ENCODE measurements at regions of chr6 and their contacts with region 1.

Region 1: GRCh38 chr6:83067448-83068413 is at the start of gene DOP1A:
- DNase-seq: peak; percentile 95
- H3K4me3 ChIP-seq: peak within 1 kb of the TSS; percentile 76 to 95
- H3K27ac ChIP-seq: peak within 1 kb of the TSS; percentile 45 to 64; a peak in 3 of 4 replicates
- H3K4me1 ChIP-seq: peaks cover 3 to 21% of the 10 kb centered on the region in 2 experiments
- H3K27me3 ChIP-seq: no peaks in the 10 kb centered on the region
- CTCF ChIP-seq: peak; percentile 98
- EP300 ChIP-seq: no peak; a peak in 1 of 4 replicates
- RAD21 ChIP-seq: peak; percentile 96
- polyA plus RNA-seq, gene DOP1A: 3.4 and 4.0 TPM in 2 replicates

Region 2: DNA sequence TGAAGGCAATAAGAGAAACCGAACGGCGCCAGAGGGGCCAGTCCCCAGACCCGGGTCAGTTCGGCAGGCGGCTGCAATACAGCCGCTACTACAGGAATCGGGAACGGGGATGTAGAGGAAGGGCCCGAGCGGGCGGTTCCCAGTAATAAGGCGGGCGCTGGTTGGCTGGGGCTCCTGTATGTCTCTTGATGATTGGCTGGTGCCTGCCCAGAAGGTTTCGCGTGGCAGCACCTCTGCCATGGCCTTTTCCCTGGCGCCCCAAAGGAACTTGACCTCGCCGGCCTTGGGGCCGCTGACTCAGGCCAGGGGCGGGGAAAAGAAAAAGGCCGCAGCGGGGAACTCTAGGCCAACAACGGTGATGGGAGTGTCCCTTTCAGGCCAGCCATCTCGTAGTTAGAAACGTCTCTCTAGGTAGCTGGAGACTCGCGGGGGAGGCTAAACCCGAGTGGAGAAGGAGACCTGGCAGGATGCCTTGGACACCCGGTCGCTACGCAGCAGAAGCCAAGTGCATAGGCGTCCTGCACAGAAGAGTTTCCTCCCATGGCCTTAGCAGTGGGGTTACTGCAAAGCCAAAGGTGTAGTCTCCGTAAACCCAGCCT is 820.0 kb before region 1 on chr6 and contains the start of gene IBTK:
- CTCF ChIA-PET with region 1: interaction called, 16 read pairs
- POLR2A ChIA-PET with region 1: interaction called, 3 read pairs
- DNase-seq: peak; percentile 97
- H3K4me3 ChIP-seq: peak within 1 kb of the TSS; percentile 88
- H3K27ac ChIP-seq: peak within 1 kb of the TSS; percentile 93 to 96
- H3K4me1 ChIP-seq: peaks cover 12 to 21% of the 10 kb centered on the region in 2 experiments
- H3K27me3 ChIP-seq: no peaks in the 10 kb centered on the region
- CTCF ChIP-seq: no peak
- EP300 ChIP-seq: no peak
- RAD21 ChIP-seq: no peak
- polyA plus RNA-seq, gene IBTK: 9.5 and 14.5 TPM in 2 replicates

Region 3: DNA sequence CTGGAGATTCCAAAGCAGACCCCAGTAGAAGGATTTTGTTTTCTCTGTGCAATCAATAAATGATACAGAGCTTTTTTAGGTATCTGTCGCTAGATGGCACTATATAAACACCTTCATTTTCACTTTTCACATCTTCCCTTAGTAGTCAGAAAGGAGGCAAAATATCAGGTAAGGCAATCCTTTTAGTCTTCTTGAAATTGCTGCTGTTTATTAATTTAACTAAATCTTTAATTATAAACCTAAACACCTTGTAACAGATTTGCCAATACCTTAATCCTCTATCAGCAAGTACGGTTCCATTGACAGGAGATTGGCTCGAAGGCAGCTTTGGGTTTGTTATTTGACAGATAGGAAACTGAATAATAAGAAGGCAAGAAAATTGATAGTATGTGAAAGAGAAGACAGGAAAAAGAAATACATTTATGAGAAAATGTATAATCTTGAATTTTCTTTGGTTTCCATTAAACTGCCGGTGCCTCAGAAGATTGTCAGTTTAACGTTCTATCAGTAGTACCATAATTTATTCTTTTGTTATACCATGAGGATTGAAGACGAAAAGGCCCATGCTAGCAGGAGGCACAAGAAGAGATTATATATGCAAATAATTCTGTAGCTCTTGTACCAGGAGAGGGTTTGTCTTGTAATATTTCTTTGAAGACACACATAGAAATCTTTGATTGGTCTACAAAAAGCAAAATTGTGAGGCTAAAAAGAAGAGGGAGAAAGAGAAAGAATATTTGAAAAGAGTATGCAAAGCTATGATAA is 796.7 kb before region 1 on chr6:
- CTCF ChIA-PET with region 1: interaction called, 30 read pairs
- POLR2A ChIA-PET with region 1: no interaction called
- DNase-seq: peak; percentile 39
- H3K4me3 ChIP-seq: no peak overlapping the region
- H3K27ac ChIP-seq: no peak overlapping the region
- H3K4me1 ChIP-seq: peaks cover 9 to 32% of the 10 kb centered on the region in 2 experiments; a peak in 3 of 4 replicates
- H3K27me3 ChIP-seq: no peaks in the 10 kb centered on the region
- CTCF ChIP-seq: peak; percentile 84
- EP300 ChIP-seq: no peak
- RAD21 ChIP-seq: peak; percentile 84

Region 4: DNA sequence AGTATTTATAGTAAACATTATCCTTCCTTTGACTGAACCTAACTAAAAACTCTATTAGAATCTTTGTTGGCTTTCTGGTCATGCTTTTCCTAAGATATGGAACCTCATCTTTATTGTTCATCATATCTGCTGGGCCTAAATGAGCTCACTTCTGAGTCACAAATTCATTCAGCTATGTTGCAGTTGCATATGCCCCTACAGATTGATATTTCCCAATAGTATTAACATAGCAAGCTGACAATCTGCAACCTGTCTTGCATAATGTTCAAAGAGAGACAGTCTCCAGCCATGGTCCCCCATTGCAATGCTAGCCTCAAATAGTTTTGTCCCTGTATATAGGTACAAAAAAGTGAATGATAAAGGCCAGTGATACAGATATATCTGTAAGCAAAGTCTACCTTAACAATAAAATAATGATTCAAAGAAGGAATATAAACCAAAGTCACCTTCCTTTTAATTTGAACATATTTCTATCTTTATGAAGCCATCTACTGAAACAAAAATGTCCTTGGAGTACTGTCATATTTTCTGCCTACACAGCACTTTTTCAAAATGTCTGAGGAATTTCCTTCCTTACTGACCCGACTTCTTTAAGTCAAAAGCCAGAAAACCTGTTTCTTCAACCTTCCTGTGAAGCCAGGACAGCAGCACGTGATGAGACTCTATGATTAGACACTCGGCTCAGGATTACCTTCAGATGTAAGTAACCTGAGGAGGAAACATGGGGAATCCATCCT is 142.8 kb before region 1 on chr6:
- CTCF ChIA-PET with region 1: no interaction called
- POLR2A ChIA-PET with region 1: no interaction called
- DNase-seq: no peak
- H3K4me3 ChIP-seq: no peak overlapping the region
- H3K27ac ChIP-seq: no peak overlapping the region
- H3K4me1 ChIP-seq: no peaks in the 10 kb centered on the region
- H3K27me3 ChIP-seq: no peaks in the 10 kb centered on the region
- CTCF ChIP-seq: no peak
- EP300 ChIP-seq: no peak
- RAD21 ChIP-seq: no peak

Region 5: DNA sequence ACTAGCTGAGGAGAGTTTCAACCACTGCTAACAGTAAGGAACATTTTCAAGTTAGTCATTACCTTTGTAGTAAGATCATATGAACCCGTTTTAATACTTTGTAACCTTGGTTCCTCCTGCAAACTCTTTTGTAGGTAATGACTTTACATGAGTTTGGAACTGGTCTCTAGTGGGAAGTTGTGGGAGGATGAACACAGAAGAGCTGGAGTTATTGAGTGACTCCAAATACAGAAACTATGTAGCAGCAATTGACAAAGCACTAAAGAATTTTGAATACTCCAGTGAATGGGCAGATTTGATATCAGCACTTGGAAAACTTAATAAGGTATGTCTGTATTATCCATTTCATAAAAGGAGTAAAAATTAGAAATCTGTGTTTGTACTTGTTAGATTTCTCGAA is 29.1 kb after region 1 on chr6:
- CTCF ChIA-PET with region 1: interaction called, 22 read pairs
- POLR2A ChIA-PET with region 1: no interaction called
- DNase-seq: no peak
- H3K4me3 ChIP-seq: no peak overlapping the region
- H3K27ac ChIP-seq: peak overlapping the region in 1 of 2 experiments; percentile 45; a peak in 2 of 4 replicates
- H3K4me1 ChIP-seq: peaks cover 0 to 6% of the 10 kb centered on the region in 2 experiments; a peak in 2 of 4 replicates
- H3K27me3 ChIP-seq: no peaks in the 10 kb centered on the region
- CTCF ChIP-seq: no peak
- EP300 ChIP-seq: no peak
- RAD21 ChIP-seq: no peak

Region 6: DNA sequence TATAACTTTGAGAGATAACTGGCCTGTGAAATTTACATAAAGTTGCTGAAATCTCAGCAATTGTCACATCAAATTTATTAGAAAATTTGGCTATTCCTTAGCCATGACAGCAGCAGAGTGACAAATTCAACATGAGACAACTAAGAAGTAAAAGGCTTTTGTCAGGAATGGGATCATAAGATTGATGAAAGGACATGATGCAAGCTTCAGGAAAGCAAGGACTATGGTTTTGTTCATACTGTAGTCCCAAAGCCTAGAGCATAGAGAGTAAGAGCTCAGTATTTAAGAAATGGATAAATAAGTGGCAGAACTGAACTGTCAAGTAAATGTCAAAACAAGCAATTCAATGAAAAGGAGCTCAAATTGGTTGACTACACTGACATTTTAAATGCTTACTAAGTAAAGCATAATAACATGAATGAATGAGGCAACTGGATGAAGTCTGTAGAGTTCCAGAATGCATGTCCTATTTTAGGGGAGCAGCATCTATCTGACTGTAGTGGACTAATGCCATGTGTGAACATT is 112.8 kb after region 1 on chr6:
- CTCF ChIA-PET with region 1: interaction called, 34 read pairs
- POLR2A ChIA-PET with region 1: no interaction called
- DNase-seq: no peak
- H3K4me3 ChIP-seq: no peak overlapping the region
- H3K27ac ChIP-seq: no peak overlapping the region
- H3K4me1 ChIP-seq: peaks cover 2 to 21% of the 10 kb centered on the region in 2 experiments; a peak in 3 of 4 replicates
- H3K27me3 ChIP-seq: no peaks in the 10 kb centered on the region
- CTCF ChIP-seq: no peak
- EP300 ChIP-seq: no peak
- RAD21 ChIP-seq: no peak

Region 7: GRCh38 chr6:83199863-83200225 is 132.1 kb after region 1 on chr6:
- CTCF ChIA-PET with region 1: interaction called, 69 read pairs
- POLR2A ChIA-PET with region 1: no interaction called
- DNase-seq: no peak
- H3K4me3 ChIP-seq: no peak overlapping the region
- H3K27ac ChIP-seq: peak overlapping the region in 1 of 2 experiments; percentile 57; a peak in 2 of 4 replicates
- H3K4me1 ChIP-seq: peaks cover 3 to 20% of the 10 kb centered on the region in 2 experiments; a peak in 2 of 4 replicates
- H3K27me3 ChIP-seq: no peaks in the 10 kb centered on the region
- CTCF ChIP-seq: no peak
- EP300 ChIP-seq: no peak
- RAD21 ChIP-seq: no peak

Region 8: DNA sequence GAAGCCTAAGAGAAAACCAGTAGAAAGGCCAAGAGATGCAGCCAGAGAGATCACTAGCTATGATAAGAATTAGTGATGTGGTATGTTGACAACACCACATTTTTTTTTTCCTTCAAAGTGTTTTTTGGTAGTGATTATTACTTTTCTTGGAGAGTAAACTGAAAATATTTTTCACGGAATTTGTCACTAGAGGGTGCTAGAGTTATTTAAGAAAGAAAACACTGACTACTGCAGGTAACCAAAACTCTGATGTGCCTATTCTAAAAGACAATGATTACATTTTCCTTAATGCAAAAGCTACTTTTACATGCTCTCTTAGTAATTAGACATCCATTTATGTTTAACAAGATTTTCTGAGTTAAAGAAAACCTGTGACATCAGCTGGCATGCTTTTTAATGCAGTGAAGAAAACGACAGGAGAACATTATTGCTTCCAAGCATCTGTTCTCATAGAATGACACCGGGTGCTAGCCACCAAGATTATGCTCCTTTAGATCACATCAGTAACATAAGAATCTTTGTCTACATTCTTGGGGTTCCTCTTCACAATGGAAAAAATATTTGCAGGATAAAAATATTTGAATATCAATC is 154.3 kb after region 1 on chr6:
- CTCF ChIA-PET with region 1: interaction called, 328 read pairs
- POLR2A ChIA-PET with region 1: no interaction called
- DNase-seq: peak; percentile 28
- H3K4me3 ChIP-seq: no peak overlapping the region; a peak in 1 of 4 replicates
- H3K27ac ChIP-seq: no peak overlapping the region
- H3K4me1 ChIP-seq: peaks cover 0 to 1% of the 10 kb centered on the region in 2 experiments; a peak in 1 of 4 replicates
- H3K27me3 ChIP-seq: no peaks in the 10 kb centered on the region
- CTCF ChIP-seq: peak; percentile 77
- EP300 ChIP-seq: no peak
- RAD21 ChIP-seq: peak; percentile 80

Region 9: GRCh38 chr6:83403191-83403590 is 335.5 kb after region 1 on chr6:
- CTCF ChIA-PET with region 1: no interaction called
- POLR2A ChIA-PET with region 1: no interaction called
- DNase-seq: no peak
- H3K4me3 ChIP-seq: no peak overlapping the region
- H3K27ac ChIP-seq: no peak overlapping the region
- H3K4me1 ChIP-seq: no peaks in the 10 kb centered on the region
- H3K27me3 ChIP-seq: no peaks in the 10 kb centered on the region
- CTCF ChIP-seq: no peak
- EP300 ChIP-seq: no peak
- RAD21 ChIP-seq: no peak

Measured in SK-N-SH (cell line).